ENCODE measurements at regions of chr20 and their contacts with region 1.

Region 1: GRCh38 chr20:3846740-3847428 is at the start of gene MAVS:
- DNase-seq: peak; percentile 90 to 95
- ATAC-seq: peak; percentile 96 to 98 (median 98)
- H3K4me3 ChIP-seq: peak within 1 kb of the TSS; percentile 100
- H3K27ac ChIP-seq: peak within 1 kb of the TSS; percentile 90
- H3K4me1 ChIP-seq: no peaks in the 10 kb centered on the region
- H3K27me3 ChIP-seq: no peaks in the 10 kb centered on the region
- CTCF ChIP-seq: no peak
- total RNA-seq, gene MAVS: 49.7 to 61.3 (median 50.7) TPM

Region 2: GRCh38 chr20:3820048-3820900 is 26.6 kb before region 1 on chr20 and contains the start of gene AP5S1:
- intact Hi-C with region 1: loop called in 1 of 2 experiments (anchors 2 kb)
- DNase-seq: peak; percentile 97 to 98
- ATAC-seq: peak; percentile 89 to 92 (median 90)
- H3K4me3 ChIP-seq: peak within 1 kb of the TSS; percentile 83
- H3K27ac ChIP-seq: peak within 1 kb of the TSS; percentile 96
- H3K4me1 ChIP-seq: peaks cover 13% of the 10 kb centered on the region
- H3K27me3 ChIP-seq: no peaks in the 10 kb centered on the region
- CTCF ChIP-seq: peak; percentile 99
- total RNA-seq, gene AP5S1: 11.8 to 17.5 (median 12.1) TPM